ENCODE measurements at regions of chr14 and their contacts with region 1.

Region 1: GRCh38 chr14:53167602-53168328 is 14.6 kb upstream of the DDHD1 start:
- DNase-seq: no peak

Region 2: DNA sequence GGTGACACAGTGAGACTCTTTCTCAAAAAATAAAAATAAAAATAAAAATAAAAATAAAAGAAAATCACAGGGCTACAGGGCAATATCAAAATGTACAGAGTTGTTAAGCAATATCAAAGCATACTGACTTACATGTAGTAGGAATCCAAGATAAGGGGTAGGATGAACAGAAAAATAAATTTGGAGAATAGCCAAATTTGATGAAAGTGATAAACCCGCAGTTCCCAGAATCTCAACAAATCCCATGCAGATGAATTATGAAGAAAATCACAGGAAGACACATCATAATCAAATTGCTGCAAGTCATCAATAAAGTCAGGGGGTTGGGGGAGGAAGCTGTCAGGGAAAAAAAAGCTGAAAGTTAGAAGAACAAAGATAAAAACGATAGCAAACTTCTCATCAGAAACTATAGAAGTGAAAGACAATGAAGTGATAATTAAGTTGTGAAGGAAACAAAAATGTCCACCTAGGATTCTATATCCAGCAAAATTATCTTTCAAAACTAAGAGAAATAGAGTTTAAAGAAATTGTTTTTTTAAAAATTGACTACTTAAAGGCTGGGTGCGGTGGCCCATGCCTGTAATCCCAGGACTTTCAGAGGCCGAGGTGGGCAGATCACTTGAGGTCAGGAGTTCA is 30.1 kb before region 1 on chr14:
- CTCF ChIA-PET with region 1: no interaction called
- POLR2A ChIA-PET with region 1: no interaction called
- DNase-seq: no peak

Region 3: GRCh38 chr14:53152890-53153701 is 14.7 kb before region 1 on chr14 and contains the start of gene DDHD1:
- CTCF ChIA-PET with region 1: interaction called, 3 read pairs
- POLR2A ChIA-PET with region 1: interaction called, 17 read pairs
- DNase-seq: peak; percentile 88

Measured in HEK293T (cell line).